ENCODE measurements at regions of chr5 and their contacts with region 1.

Region 1: GRCh38 chr5:157948738-157949410 is 89.9 kb upstream of the CLINT1 start:
- DNase-seq: peak; percentile 85
- ATAC-seq: peak; percentile 99
- H3K4me3 Mint-ChIP-seq: peak overlapping the region; percentile 7
- H3K27ac Mint-ChIP-seq: peak overlapping the region; percentile 0
- H3K4me1 Mint-ChIP-seq: peaks cover 4% of the 10 kb centered on the region
- H3K27me3 Mint-ChIP-seq: peaks cover 9% of the 10 kb centered on the region

Region 2: GRCh38 chr5:157761690-157762621 is 186.9 kb before region 1 on chr5:
- CTCF ChIA-PET with region 1: interaction called, 18 read pairs
- POLR2A ChIA-PET with region 1: no interaction called
- DNase-seq: peak; percentile 53
- ATAC-seq: peak; percentile 90
- H3K4me3 Mint-ChIP-seq: no peak overlapping the region
- H3K27ac Mint-ChIP-seq: no peak overlapping the region
- H3K4me1 Mint-ChIP-seq: no peaks in the 10 kb centered on the region
- H3K27me3 Mint-ChIP-seq: no peaks in the 10 kb centered on the region

Region 3: GRCh38 chr5:157812086-157812485 is 136.8 kb before region 1 on chr5:
- CTCF ChIA-PET with region 1: interaction called, 94 read pairs
- POLR2A ChIA-PET with region 1: no interaction called
- DNase-seq: no peak
- ATAC-seq: no peak
- H3K4me3 Mint-ChIP-seq: no peak overlapping the region
- H3K27ac Mint-ChIP-seq: no peak overlapping the region
- H3K4me1 Mint-ChIP-seq: peaks cover 5% of the 10 kb centered on the region
- H3K27me3 Mint-ChIP-seq: no peaks in the 10 kb centered on the region

Region 4: GRCh38 chr5:157855404-157855994 is 93.4 kb before region 1 on chr5:
- CTCF ChIA-PET with region 1: interaction called, 18 read pairs
- POLR2A ChIA-PET with region 1: interaction called, 3 read pairs
- DNase-seq: peak; percentile 29
- ATAC-seq: no peak
- H3K4me3 Mint-ChIP-seq: no peak overlapping the region
- H3K27ac Mint-ChIP-seq: no peak overlapping the region
- H3K4me1 Mint-ChIP-seq: peaks cover 57% of the 10 kb centered on the region
- H3K27me3 Mint-ChIP-seq: no peaks in the 10 kb centered on the region

Region 5: DNA sequence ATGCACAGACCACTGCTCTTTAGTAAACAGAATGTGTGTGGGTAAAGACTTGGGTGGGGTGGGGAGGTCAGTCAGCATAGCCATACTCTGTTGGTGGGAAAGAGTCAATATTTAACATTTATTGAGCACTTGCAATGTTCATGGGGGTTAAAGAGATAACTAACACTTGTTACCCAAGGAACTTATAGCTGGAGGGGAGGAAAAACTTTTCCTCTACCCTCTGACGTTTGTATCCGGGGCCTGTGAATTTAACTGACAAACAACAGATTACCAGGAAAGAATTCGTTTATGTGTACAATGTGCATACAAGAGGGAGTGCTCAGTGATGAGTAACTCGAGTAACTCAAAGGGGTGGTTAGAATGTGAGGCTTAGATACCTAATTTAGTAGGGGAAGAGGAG is 83.1 kb before region 1 on chr5:
- CTCF ChIA-PET with region 1: no interaction called
- POLR2A ChIA-PET with region 1: no interaction called
- DNase-seq: no peak
- ATAC-seq: no peak
- H3K4me3 Mint-ChIP-seq: no peak overlapping the region
- H3K27ac Mint-ChIP-seq: no peak overlapping the region
- H3K4me1 Mint-ChIP-seq: peaks cover 28% of the 10 kb centered on the region
- H3K27me3 Mint-ChIP-seq: no peaks in the 10 kb centered on the region

Region 6: DNA sequence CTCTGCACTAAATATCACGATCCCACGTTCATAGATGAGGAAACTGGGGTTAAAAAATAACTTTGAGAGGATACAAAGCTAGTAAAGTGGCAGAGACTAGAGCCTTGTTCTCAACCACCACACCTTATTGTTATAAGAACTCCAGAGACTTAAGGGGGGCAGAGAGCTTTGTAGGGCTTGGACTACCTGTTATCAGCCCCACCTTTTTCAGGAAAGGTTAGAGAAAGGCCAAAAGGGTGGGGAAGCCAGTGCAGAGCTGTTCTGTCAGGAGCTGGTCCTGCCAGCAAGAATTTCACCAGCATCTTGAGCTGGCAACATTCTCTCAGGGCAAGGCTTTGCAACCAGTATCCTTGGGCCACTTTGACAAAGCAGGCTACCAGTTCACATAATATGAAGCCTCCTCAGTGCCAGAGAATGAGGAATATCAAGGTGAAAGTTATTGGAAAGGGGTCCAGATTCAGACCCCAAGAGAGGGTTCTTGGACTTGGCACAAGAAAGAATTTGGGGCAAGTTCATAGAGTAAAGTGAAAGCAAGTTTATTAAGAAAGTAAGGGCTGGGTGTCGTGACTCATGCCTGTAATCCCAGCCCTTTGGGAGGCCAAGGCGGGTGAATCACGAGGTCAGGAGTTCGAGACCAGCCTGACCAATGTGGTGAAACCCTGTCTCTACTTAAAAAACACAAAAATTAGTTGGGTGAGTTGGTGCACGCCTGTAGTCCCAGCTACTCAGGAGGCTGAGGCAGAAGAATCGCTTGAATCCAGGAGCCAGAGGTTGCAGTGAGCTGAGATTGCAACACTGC is 23.7 kb before region 1 on chr5:
- CTCF ChIA-PET with region 1: interaction called, 20 read pairs
- POLR2A ChIA-PET with region 1: no interaction called
- DNase-seq: no peak
- ATAC-seq: no peak
- H3K4me3 Mint-ChIP-seq: no peak overlapping the region
- H3K27ac Mint-ChIP-seq: no peak overlapping the region
- H3K4me1 Mint-ChIP-seq: peaks cover 7% of the 10 kb centered on the region
- H3K27me3 Mint-ChIP-seq: no peaks in the 10 kb centered on the region